Activated B cell treated with CpG ODN at 0.5 μM for 24 hours (primary cell): ENCODE measurements at regions of chr1 and their contacts with region 1.

Region 1: GRCh38 chr1:32128964-32129363 is 21.1 kb downstream of the KPNA6 start:
- DNase-seq: no peak
- ATAC-seq: no peak
- H3K4me3 Mint-ChIP-seq: no peak overlapping the region
- H3K27ac Mint-ChIP-seq: no peak overlapping the region
- H3K4me1 Mint-ChIP-seq: peaks cover 36% of the 10 kb centered on the region
- H3K27me3 Mint-ChIP-seq: no peaks in the 10 kb centered on the region
- CTCF ChIP-seq: no peak

Region 2: GRCh38 chr1:32052887-32053286 is 76.1 kb before region 1 on chr1:
- CTCF ChIA-PET with region 1: no interaction called
- POLR2A ChIA-PET with region 1: no interaction called
- intact Hi-C with region 1: no loop called
- DNase-seq: no peak
- ATAC-seq: no peak
- H3K4me3 Mint-ChIP-seq: no peak overlapping the region
- H3K27ac Mint-ChIP-seq: no peak overlapping the region
- H3K4me1 Mint-ChIP-seq: peaks cover 2% of the 10 kb centered on the region
- H3K27me3 Mint-ChIP-seq: no peaks in the 10 kb centered on the region
- CTCF ChIP-seq: no peak

Region 3: GRCh38 chr1:32192220-32192948 is 63.4 kb after region 1 on chr1:
- CTCF ChIA-PET with region 1: no interaction called
- POLR2A ChIA-PET with region 1: interaction called, 11 read pairs
- intact Hi-C with region 1: no loop called
- DNase-seq: no peak
- ATAC-seq: no peak
- H3K4me3 Mint-ChIP-seq: no peak overlapping the region
- H3K27ac Mint-ChIP-seq: no peak overlapping the region
- H3K4me1 Mint-ChIP-seq: peaks cover 3% of the 10 kb centered on the region
- H3K27me3 Mint-ChIP-seq: no peaks in the 10 kb centered on the region
- CTCF ChIP-seq: no peak